Left colon (tissue), 2 donors: ENCODE measurements at regions of chr2 and their contacts with region 1.

Region 1: GRCh38 chr2:54704688-54705605 is 18.5 kb upstream of the EML6 start:
- DNase-seq: no peak
- ATAC-seq: peak; percentile 24

Region 2: GRCh38 chr2:54106631-54107454 is 598.1 kb before region 1 on chr2:
- intact Hi-C with region 1: loop called in 1 of 2 experiments (anchors 10 kb)
- DNase-seq: peak in 1 of 2 donors; percentile 28
- ATAC-seq: peak; percentile 84

Region 3: DNA sequence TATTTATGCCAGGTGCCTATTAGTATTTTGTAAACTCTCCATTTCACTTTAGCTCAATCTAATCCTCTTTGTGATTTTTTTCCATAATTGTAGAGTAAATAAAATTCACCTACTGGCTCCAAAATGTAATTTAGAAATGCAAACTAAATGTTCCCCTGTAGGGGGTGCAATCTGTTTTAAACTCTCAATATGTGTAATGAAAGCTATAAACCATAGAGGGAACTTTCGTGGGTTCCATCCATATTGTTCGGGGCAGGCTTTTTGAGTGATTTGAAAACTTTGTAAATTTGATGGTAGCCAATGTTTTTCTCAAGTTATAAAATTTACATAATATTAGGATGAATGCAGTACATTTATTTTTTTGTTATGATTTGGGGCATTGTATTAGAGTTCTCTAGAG is 498.4 kb before region 1 on chr2:
- intact Hi-C with region 1: loop called in 1 of 2 experiments (anchors 10 kb)
- DNase-seq: no peak
- ATAC-seq: no peak

Region 4: DNA sequence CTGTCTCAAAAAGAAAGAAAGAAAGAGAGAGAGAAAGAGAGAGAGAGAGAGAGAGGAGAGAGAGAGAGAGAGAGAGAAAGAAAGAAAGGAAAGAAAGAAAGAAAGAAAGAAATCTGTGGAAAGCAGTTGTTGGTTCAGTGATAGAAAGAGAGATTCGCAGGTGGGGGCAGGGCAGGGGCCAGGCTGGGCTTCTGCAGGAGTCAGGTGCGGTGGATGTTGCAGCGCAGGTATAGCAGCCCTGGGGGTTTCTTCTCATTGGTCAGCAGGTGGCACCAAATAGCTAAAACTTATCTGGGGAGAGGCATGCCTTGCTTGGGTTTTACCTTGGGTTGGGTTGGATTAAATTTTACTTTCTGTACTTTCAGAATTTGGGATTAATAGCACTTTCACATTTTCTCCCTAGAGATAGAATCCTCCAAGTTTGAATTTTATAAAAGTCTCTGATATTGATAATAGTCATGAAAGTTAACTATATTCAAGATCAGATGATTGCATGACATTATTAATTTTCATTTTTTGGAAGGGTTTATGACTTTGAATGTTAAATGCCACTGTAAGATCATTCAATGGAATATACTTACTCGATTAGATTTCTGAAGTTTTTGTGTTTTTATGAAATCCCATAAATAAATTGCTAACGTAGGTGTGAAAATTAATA is 182.2 kb before region 1 on chr2:
- intact Hi-C with region 1: loop called in 1 of 2 experiments (anchors 5 kb)
- DNase-seq: peak; percentile 58 to 65
- ATAC-seq: peak; percentile 96

Region 5: GRCh38 chr2:54558188-54559005 is 146.6 kb before region 1 on chr2:
- intact Hi-C with region 1: no loop called
- DNase-seq: peak; percentile 72 to 86
- ATAC-seq: peak; percentile 67

Region 6: DNA sequence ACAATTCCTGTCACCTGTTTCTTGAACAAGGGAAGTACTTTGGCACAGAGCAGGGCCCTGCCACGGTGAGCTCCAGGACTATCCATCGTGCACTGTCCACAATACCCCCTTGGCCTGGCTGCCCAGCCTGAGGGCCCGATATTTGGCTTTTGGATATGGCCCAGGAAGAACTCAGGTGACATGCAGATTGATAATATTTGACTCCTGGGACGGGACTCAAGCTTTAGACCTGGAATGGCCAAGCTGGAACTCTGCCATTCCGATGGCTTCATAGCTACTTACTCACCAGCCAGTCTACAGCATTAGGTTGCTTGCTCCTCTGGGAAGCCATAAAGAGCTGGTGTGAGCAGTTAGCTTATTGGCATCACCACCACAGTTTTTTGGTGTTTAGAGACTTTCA is 45.1 kb after region 1 on chr2:
- intact Hi-C with region 1: no loop called
- DNase-seq: no peak
- ATAC-seq: no peak

Region 7: GRCh38 chr2:54773838-54774237 is 68.9 kb after region 1 on chr2:
- intact Hi-C with region 1: no loop called
- DNase-seq: no peak
- ATAC-seq: no peak